A549 (cell line): ENCODE measurements at regions of chr1 and their contacts with region 1.

Region 1: DNA sequence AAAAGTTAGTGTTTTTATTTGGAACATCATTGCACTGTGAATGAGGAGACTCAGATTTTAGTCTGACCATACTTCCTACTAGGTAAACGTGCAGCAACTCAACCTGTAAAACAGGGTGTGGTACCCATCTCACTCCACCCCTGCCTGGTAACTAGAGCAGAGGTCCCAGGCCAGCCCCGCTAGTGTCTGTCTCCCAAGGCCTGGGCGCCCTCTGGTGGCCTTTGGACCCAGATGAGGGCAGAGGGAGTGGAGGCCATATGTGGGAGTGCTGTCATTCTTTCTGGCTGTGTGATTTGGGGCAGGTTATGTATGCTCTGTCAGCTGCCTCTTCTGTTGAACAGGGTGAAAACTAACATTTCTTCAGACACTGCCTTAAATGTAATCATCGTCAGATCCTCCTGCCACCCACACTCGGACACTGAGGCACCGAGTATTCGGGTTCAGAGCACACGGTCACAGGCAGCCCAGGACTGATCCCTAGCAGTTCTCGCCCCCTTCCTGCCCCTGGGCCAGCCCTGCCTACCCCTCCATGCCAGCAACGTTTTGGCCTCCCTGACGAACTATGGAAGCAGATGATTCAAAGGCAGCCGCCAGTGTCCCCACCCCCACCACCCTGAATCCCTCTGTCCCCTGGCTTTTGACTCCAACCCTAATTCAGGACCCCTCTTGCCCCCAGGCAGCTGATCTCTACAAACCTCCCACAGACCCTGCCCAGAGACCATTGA is 76.0 kb downstream of the CD247 start:
- DNase-seq: peak; percentile 79 to 93
- ATAC-seq: peak; percentile 95 to 96
- H3K4me3 ChIP-seq: no peak overlapping the region
- H3K27ac ChIP-seq: peak overlapping the region in 1 of 2 experiments; percentile 14; a peak in 1 of 6 replicates
- H3K4me1 ChIP-seq: peaks cover 3% of the 10 kb centered on the region; the same call in 2 of the 3 replicates
- CTCF ChIP-seq: peak; percentile 91
- EP300 ChIP-seq: no peak
- POLR2A ChIP-seq: no peak
- RAD21 ChIP-seq: peak; percentile 92

Region 2: GRCh38 chr1:167066333-167067122 is 375.8 kb before region 1 on chr1:
- CTCF ChIA-PET with region 1: interaction called, 20 read pairs
- POLR2A ChIA-PET with region 1: no interaction called
- DNase-seq: peak; percentile 45 to 86
- ATAC-seq: peak; percentile 89 to 98
- H3K4me3 ChIP-seq: peak overlapping the region; percentile 40
- H3K27ac ChIP-seq: peak overlapping the region; percentile 65 to 82
- H3K4me1 ChIP-seq: no peaks in the 10 kb centered on the region
- CTCF ChIP-seq: peak; percentile 97
- EP300 ChIP-seq: no peak
- POLR2A ChIP-seq: no peak
- RAD21 ChIP-seq: peak; percentile 96 to 99

Region 3: GRCh38 chr1:167152192-167152876 is 290.0 kb before region 1 on chr1:
- CTCF ChIA-PET with region 1: no interaction called
- POLR2A ChIA-PET with region 1: no interaction called
- DNase-seq: no peak
- ATAC-seq: no peak
- H3K4me3 ChIP-seq: no peak overlapping the region
- H3K27ac ChIP-seq: no peak overlapping the region
- H3K4me1 ChIP-seq: no peaks in the 10 kb centered on the region
- CTCF ChIP-seq: no peak
- EP300 ChIP-seq: no peak
- POLR2A ChIP-seq: no peak
- RAD21 ChIP-seq: no peak

Region 4: GRCh38 chr1:167270349-167271092 is 171.8 kb before region 1 on chr1:
- CTCF ChIA-PET with region 1: interaction called, 72 read pairs
- POLR2A ChIA-PET with region 1: no interaction called
- DNase-seq: no peak
- ATAC-seq: 0 out of 6 replicates have a peak, but pooled peaks of 1 of the 2 experiments have one; percentile 30
- H3K4me3 ChIP-seq: no peak overlapping the region
- H3K27ac ChIP-seq: no peak overlapping the region
- H3K4me1 ChIP-seq: peaks cover 5% of the 10 kb centered on the region; the same call in 1 of the 3 replicates
- CTCF ChIP-seq: no peak
- EP300 ChIP-seq: no peak
- POLR2A ChIP-seq: no peak
- RAD21 ChIP-seq: no peak

Region 5: DNA sequence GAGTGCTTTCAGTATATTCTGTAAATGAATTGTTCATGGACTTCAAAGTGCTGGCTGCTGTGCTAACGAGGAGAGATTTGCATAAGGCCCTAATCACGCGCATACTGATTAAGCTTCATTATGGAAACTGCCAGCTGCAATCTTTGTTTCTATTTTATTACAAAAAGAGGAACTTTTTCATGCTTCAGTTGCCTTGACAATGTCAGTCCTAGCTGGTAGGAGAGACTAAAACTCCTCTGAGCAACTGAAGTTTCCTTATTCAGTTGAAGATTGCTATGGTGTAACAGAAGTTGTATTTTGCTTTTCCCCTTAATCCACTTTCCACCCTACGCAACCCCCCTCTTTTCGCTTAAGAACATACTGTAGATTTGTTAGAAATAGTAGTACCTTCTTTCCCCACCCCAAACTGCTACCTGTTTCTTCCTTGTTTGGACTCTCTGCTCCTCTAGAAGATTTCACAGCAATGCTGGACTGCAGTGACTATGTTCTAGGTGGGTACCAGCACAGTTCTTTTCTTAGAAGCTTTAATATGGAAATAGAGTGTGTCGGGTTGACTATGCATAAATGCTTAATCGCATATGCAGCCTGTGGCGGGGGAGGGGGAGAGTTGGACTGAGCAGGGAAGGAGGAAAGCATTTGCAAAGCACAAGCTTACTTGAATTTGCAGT is 113.3 kb before region 1 on chr1:
- CTCF ChIA-PET with region 1: no interaction called
- POLR2A ChIA-PET with region 1: no interaction called
- DNase-seq: no peak
- ATAC-seq: no peak
- H3K4me3 ChIP-seq: no peak overlapping the region
- H3K27ac ChIP-seq: no peak overlapping the region
- H3K4me1 ChIP-seq: peaks cover 35% of the 10 kb centered on the region
- CTCF ChIP-seq: no peak
- EP300 ChIP-seq: no peak
- POLR2A ChIP-seq: no peak
- RAD21 ChIP-seq: no peak

Region 6: DNA sequence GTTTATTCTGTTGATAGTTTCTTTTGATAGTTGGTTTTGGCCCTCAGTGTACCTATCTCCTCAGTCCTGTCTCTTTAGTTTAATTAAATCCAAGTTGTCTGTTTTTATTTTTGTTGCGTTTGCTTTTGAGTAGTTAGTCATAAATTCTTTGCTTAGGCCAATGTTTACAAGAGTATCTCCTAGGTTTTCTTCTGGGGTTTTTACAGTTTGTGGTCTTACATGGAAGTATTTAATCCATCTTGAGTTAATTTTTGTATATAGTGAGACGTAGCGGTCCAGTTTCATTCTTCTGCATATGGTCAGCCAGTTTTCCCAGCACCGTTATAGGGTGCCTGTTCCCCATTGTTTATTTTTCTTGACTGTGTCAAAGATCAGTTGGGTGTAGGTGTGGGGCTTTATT is 82.2 kb before region 1 on chr1:
- CTCF ChIA-PET with region 1: no interaction called
- POLR2A ChIA-PET with region 1: no interaction called
- DNase-seq: no peak
- ATAC-seq: no peak
- H3K4me3 ChIP-seq: no peak overlapping the region
- H3K27ac ChIP-seq: no peak overlapping the region
- H3K4me1 ChIP-seq: peaks cover 7% of the 10 kb centered on the region; the same call in 2 of the 3 replicates
- CTCF ChIP-seq: no peak
- EP300 ChIP-seq: no peak
- POLR2A ChIP-seq: no peak
- RAD21 ChIP-seq: no peak

Region 7: GRCh38 chr1:167420510-167420909 is 21.8 kb before region 1 on chr1:
- CTCF ChIA-PET with region 1: interaction called, 29 read pairs
- POLR2A ChIA-PET with region 1: no interaction called
- DNase-seq: peak in 1 of 2 experiments; percentile 43
- ATAC-seq: peak; percentile 54 to 60; a peak in 4 of 6 replicates
- H3K4me3 ChIP-seq: no peak overlapping the region
- H3K27ac ChIP-seq: peak overlapping the region in 1 of 2 experiments; percentile 69; a peak in 3 of 6 replicates
- H3K4me1 ChIP-seq: peaks cover 7% of the 10 kb centered on the region; the same call in 2 of the 3 replicates
- CTCF ChIP-seq: no peak
- EP300 ChIP-seq: no peak
- POLR2A ChIP-seq: no peak
- RAD21 ChIP-seq: no peak

Region 8: GRCh38 chr1:167542109-167543032 is 100.1 kb after region 1 on chr1:
- CTCF ChIA-PET with region 1: interaction called, 10 read pairs
- POLR2A ChIA-PET with region 1: no interaction called
- DNase-seq: no peak
- ATAC-seq: no peak
- H3K4me3 ChIP-seq: no peak overlapping the region
- H3K27ac ChIP-seq: peak overlapping the region in 1 of 2 experiments; percentile 12; a peak in 1 of 6 replicates
- H3K4me1 ChIP-seq: peaks cover 17% of the 10 kb centered on the region; the same call in 2 of the 3 replicates
- CTCF ChIP-seq: no peak
- EP300 ChIP-seq: no peak
- POLR2A ChIP-seq: no peak
- RAD21 ChIP-seq: no peak